ENCODE measurements at regions of chr1 and their contacts with region 1.

Region 1: GRCh38 chr1:116485071-116485735 is 85.6 kb downstream of the CD58 start:
- DNase-seq: peak; percentile 89

Region 2: GRCh38 chr1:116139592-116140134 is 345.5 kb before region 1 on chr1:
- CTCF ChIA-PET with region 1: interaction called, 121 read pairs
- POLR2A ChIA-PET with region 1: interaction called, 18 read pairs
- DNase-seq: no peak

Region 3: GRCh38 chr1:116147972-116148371 is 337.2 kb before region 1 on chr1:
- CTCF ChIA-PET with region 1: interaction called, 30 read pairs
- POLR2A ChIA-PET with region 1: no interaction called
- DNase-seq: no peak

Region 4: GRCh38 chr1:116330245-116330629 is 155.0 kb before region 1 on chr1:
- CTCF ChIA-PET with region 1: no interaction called
- POLR2A ChIA-PET with region 1: no interaction called
- DNase-seq: no peak

Region 5: GRCh38 chr1:116472431-116472961 is 12.7 kb before region 1 on chr1:
- CTCF ChIA-PET with region 1: interaction called, 23 read pairs
- POLR2A ChIA-PET with region 1: no interaction called
- DNase-seq: peak; percentile 27

Region 6: DNA sequence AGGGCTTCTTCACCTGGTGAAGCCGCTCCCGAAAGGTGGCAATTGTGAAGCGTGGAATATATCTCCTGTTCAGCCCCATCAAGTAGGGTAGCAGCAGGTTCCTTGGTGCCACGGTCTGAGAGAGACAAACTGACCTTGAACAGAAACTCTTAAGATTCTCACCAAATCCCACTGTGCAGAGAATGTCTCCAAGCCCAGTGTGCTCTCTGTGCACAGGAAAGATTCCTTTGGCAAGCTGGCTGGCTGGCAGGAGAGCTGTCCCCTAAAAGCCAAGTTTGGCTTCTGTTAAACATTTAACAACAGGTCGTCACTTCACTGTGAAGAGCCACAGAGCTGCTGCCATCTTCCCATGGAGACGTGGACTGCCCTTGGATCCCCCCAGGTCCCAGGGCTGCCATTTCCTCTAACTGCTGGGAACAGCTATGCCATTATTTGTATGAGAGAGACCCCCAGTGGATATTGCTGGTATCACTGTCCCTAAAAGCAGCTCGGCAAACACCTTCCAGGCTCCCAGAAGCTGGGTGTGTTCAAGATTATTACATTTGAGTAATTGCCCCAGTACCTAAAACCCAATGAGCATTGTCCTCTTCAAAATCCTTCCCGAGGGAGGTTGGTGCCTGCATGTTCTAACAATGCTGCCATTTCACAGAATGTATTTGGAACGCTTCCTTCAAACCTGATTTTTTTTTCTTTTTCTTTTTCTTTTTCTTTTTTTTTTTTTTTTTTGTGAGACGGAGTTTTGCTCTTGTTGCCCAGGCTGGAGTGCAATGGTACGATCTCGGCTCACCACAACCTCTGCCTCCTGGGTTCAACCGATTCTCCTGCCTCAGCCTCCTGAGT is 13.8 kb after region 1 on chr1:
- CTCF ChIA-PET with region 1: interaction called, 33 read pairs
- POLR2A ChIA-PET with region 1: interaction called, 4 read pairs
- DNase-seq: peak; percentile 89

Measured in HEK293T (cell line).